Calu3 (cell line): ENCODE measurements at regions of chr4 and their contacts with region 1.

Region 1: GRCh38 chr4:99998062-99998867 is 48.2 kb upstream of the H2AZ1 start:
- DNase-seq: no peak
- H3K4me3 Mint-ChIP-seq: no peak overlapping the region
- H3K27ac Mint-ChIP-seq: peak overlapping the region; percentile 36
- H3K4me1 Mint-ChIP-seq: peaks cover 15% of the 10 kb centered on the region
- H3K27me3 Mint-ChIP-seq: no peaks in the 10 kb centered on the region
- CTCF ChIP-seq: no peak

Region 2: DNA sequence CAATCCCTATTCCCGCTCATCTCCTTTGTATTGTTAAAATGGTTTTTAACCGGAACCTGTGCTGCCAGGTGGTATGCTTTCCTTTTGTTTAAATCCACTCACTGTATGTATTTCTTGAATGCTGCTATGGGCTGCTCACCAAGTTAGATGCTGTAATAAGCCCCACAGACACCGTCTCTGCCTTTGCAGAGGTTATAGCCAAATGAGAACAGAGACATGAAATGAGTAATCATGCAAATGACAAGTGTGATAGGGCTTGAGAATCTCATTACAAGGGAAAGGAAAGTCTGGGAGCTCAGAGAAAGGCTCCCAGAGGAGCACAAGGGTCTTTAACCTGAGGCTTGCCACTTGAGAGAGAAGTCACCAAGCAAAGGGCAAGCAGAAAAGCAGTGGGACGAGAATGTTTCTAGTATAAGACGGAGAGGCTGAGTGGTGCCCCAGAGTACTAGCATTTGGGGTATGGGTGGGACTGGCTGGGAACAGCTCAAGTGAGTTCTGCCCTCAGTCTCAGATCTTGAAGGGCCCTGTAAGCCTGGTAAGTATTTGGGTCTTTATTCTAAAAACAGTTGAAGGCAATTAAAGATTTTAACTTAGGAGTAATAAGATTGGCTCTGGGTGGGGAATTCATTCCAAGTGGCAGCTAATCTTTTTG is 62.6 kb after region 1 on chr4:
- CTCF ChIA-PET with region 1: interaction called, 7 read pairs
- intact Hi-C with region 1: loop called (anchors 1 kb)
- DNase-seq: no peak
- H3K4me3 Mint-ChIP-seq: no peak overlapping the region
- H3K27ac Mint-ChIP-seq: no peak overlapping the region
- H3K4me1 Mint-ChIP-seq: peaks cover 13% of the 10 kb centered on the region
- H3K27me3 Mint-ChIP-seq: no peaks in the 10 kb centered on the region
- CTCF ChIP-seq: no peak

Region 3: DNA sequence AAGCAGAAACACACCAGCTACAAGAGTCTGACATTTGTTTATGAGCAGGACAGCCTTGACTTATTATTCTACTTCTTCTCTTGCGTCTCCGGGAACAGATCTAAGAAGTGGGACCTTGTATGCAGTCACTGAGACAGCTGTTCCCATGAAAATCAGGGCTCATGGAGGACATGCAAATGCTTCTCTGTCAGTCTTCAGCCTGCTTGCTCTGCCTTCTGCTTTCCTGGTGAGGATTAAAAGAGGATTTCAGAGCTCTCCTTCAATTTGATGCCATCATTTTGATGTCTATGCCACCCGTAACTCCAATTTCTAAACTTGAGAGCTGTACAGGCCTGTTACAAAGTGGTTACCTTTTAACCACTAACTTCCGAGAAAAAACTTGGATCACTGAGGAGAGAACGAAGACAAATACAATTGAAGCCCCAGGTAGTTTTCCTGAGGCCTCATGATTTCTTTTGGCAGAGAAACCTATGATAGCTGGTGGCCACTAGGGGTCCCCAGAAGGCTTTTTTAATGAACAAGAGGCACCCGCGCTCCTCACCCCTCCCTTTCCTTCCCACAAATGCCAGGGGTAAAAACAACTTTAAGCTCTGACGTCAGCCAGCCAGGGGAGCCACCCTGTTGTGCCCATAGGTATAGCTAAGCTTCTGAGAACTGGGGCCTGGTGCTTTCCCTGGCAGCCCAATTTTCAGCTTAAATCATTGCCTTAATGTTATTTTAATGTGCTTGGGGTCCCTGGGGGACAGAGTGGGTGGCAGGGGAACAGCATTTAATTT is 95.0 kb after region 1 on chr4:
- CTCF ChIA-PET with region 1: interaction called, 11 read pairs
- intact Hi-C with region 1: no loop called
- DNase-seq: peak; percentile 76
- H3K4me3 Mint-ChIP-seq: no peak overlapping the region
- H3K27ac Mint-ChIP-seq: no peak overlapping the region
- H3K4me1 Mint-ChIP-seq: peaks cover 10% of the 10 kb centered on the region
- H3K27me3 Mint-ChIP-seq: no peaks in the 10 kb centered on the region
- CTCF ChIP-seq: peak; percentile 62

Region 4: GRCh38 chr4:100848869-100849268 is 850.6 kb after region 1 on chr4:
- CTCF ChIA-PET with region 1: no interaction called
- intact Hi-C with region 1: loop called (anchors 10 kb)
- DNase-seq: no peak
- H3K4me3 Mint-ChIP-seq: no peak overlapping the region
- H3K27ac Mint-ChIP-seq: no peak overlapping the region
- H3K4me1 Mint-ChIP-seq: no peaks in the 10 kb centered on the region
- H3K27me3 Mint-ChIP-seq: no peaks in the 10 kb centered on the region
- CTCF ChIP-seq: no peak